CD4-positive, alpha-beta memory T cell (primary cell): ENCODE measurements at regions of chr3 and their contacts with region 1.

Region 1: DNA sequence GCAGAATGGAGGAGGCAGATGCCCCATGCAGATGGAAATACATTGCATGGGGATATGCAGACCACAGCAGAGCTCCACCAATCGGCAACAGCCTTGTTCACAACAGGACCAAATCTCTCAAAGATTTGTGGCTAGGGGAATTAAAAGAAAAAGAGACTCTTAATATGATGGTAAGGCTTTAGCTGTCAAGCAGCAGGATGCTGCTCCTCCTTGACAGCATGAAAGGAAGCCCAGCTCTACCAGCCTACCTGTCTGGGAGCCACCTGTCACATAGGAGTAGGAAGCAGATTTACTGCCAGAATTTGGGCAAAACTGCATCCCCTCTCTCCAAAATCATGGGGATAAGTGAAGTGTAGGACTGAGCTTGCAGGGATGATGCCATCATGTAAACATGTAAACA is 769.6 kb upstream of the ARPP21 start:
- DNase-seq: no peak
- H3K4me3 ChIP-seq: no peak overlapping the region
- H3K4me3 Mint-ChIP-seq: no peak overlapping the region
- H3K27ac ChIP-seq: no peak overlapping the region
- H3K27ac Mint-ChIP-seq: no peak overlapping the region
- H3K4me1 ChIP-seq: no peaks in the 10 kb centered on the region
- H3K4me1 Mint-ChIP-seq: no peaks in the 10 kb centered on the region
- H3K27me3 ChIP-seq: no peaks in the 10 kb centered on the region
- H3K27me3 Mint-ChIP-seq: no peaks in the 10 kb centered on the region

Region 2: GRCh38 chr3:34837848-34838741 is 31.6 kb before region 1 on chr3:
- CTCF ChIA-PET with region 1: no interaction called
- POLR2A ChIA-PET with region 1: no interaction called
- intact Hi-C with region 1: loop called (anchors 1 kb)
- DNase-seq: no peak
- H3K4me3 ChIP-seq: no peak overlapping the region
- H3K4me3 Mint-ChIP-seq: no peak overlapping the region
- H3K27ac ChIP-seq: no peak overlapping the region
- H3K27ac Mint-ChIP-seq: no peak overlapping the region
- H3K4me1 ChIP-seq: no peaks in the 10 kb centered on the region
- H3K4me1 Mint-ChIP-seq: no peaks in the 10 kb centered on the region
- H3K27me3 ChIP-seq: no peaks in the 10 kb centered on the region
- H3K27me3 Mint-ChIP-seq: no peaks in the 10 kb centered on the region